ENCODE measurements at regions of chr11 and their contacts with region 1.

Region 1: GRCh38 chr11:123020968-123021367 is 39.3 kb upstream of the BSX start:
- DNase-seq: peak in 6 of 14 experiments; percentile 7 to 62 (median 32)
- ATAC-seq: peak; percentile 60
- H3K4me3 ChIP-seq: no peak overlapping the region
- H3K4me3 Mint-ChIP-seq: no peak overlapping the region
- H3K27ac ChIP-seq: no peak overlapping the region
- H3K27ac Mint-ChIP-seq: no peak overlapping the region
- H3K4me1 ChIP-seq: peaks cover 8% of the 10 kb centered on the region
- H3K4me1 Mint-ChIP-seq: peaks cover 8% of the 10 kb centered on the region
- H3K27me3 ChIP-seq: no peaks in the 10 kb centered on the region
- H3K27me3 Mint-ChIP-seq: peaks cover 11% of the 10 kb centered on the region
- CTCF ChIP-seq: peak; percentile 58

Region 2: GRCh38 chr11:122584670-122585069 is 436.3 kb before region 1 on chr11:
- CTCF ChIA-PET with region 1: interaction called, 4 read pairs
- POLR2A ChIA-PET with region 1: no interaction called
- intact Hi-C with region 1: loop called in 1 of 2 experiments (anchors 5 kb)
- DNase-seq: no peak
- ATAC-seq: no peak
- H3K4me3 ChIP-seq: no peak overlapping the region
- H3K4me3 Mint-ChIP-seq: no peak overlapping the region
- H3K27ac ChIP-seq: no peak overlapping the region
- H3K27ac Mint-ChIP-seq: no peak overlapping the region
- H3K4me1 ChIP-seq: peaks cover 8% of the 10 kb centered on the region
- H3K4me1 Mint-ChIP-seq: peaks cover 7% of the 10 kb centered on the region
- H3K27me3 ChIP-seq: peaks cover 4 to 6% of the 10 kb centered on the region in 2 experiments
- H3K27me3 Mint-ChIP-seq: no peaks in the 10 kb centered on the region
- CTCF ChIP-seq: no peak

Region 3: GRCh38 chr11:122628810-122629555 is 392.0 kb before region 1 on chr11:
- CTCF ChIA-PET with region 1: no interaction called
- POLR2A ChIA-PET with region 1: no interaction called
- intact Hi-C with region 1: loop called in 1 of 2 experiments (anchors 5 kb)
- DNase-seq: peak; percentile 40 to 81 (median 64)
- ATAC-seq: peak; percentile 80
- H3K4me3 ChIP-seq: no peak overlapping the region
- H3K4me3 Mint-ChIP-seq: no peak overlapping the region
- H3K27ac ChIP-seq: no peak overlapping the region
- H3K27ac Mint-ChIP-seq: no peak overlapping the region
- H3K4me1 ChIP-seq: no peaks in the 10 kb centered on the region
- H3K4me1 Mint-ChIP-seq: peaks cover 14% of the 10 kb centered on the region
- H3K27me3 ChIP-seq: no peaks in the 10 kb centered on the region
- H3K27me3 Mint-ChIP-seq: no peaks in the 10 kb centered on the region
- CTCF ChIP-seq: peak; percentile 65

Region 4: GRCh38 chr11:122796128-122796717 is 224.7 kb before region 1 on chr11:
- CTCF ChIA-PET with region 1: interaction called, 3 read pairs
- POLR2A ChIA-PET with region 1: no interaction called
- intact Hi-C with region 1: loop called (anchors 1 to 10 kb)
- DNase-seq: peak; percentile 52 to 78 (median 60)
- ATAC-seq: peak; percentile 94
- H3K4me3 ChIP-seq: no peak overlapping the region
- H3K4me3 Mint-ChIP-seq: no peak overlapping the region
- H3K27ac ChIP-seq: no peak overlapping the region
- H3K27ac Mint-ChIP-seq: no peak overlapping the region
- H3K4me1 ChIP-seq: no peaks in the 10 kb centered on the region
- H3K4me1 Mint-ChIP-seq: no peaks in the 10 kb centered on the region
- H3K27me3 ChIP-seq: no peaks in the 10 kb centered on the region
- H3K27me3 Mint-ChIP-seq: no peaks in the 10 kb centered on the region
- CTCF ChIP-seq: peak; percentile 95

Region 5: DNA sequence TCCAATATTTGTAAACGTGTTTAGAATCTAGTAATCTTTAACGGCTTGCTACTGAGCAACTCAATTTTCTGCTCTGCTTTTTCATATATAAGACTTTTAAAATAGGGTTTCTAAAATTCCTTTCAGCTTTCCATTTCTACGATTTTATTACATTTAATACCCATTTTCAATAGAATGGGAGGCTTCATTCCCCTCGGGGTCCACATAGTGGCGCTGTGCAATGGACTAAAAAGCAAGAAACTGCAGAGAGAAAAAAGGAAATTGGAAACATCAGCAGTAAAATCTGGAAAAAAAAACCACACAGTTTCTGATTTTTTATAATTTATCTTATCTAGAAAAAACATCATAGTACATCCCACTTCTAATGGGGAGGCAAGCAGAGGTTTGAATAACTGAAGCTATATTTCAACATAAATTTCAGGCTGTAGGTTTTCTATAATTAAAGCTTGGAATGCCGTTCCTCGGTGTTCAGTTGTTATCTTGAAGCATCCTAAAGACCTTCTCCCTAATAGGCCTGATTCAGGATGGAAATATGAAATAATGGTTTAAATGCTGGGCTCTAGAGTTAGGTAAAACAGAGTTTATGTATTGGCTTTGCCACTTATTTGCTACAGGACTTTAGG is 157.2 kb before region 1 on chr11:
- CTCF ChIA-PET with region 1: interaction called, 8 read pairs
- POLR2A ChIA-PET with region 1: interaction called, 6 read pairs
- intact Hi-C with region 1: loop called (anchors 1 kb)
- DNase-seq: peak in 12 of 14 experiments; percentile 12 to 66 (median 31)
- ATAC-seq: peak; percentile 49
- H3K4me3 ChIP-seq: no peak overlapping the region
- H3K4me3 Mint-ChIP-seq: no peak overlapping the region
- H3K27ac ChIP-seq: no peak overlapping the region
- H3K27ac Mint-ChIP-seq: no peak overlapping the region
- H3K4me1 ChIP-seq: no peaks in the 10 kb centered on the region
- H3K4me1 Mint-ChIP-seq: no peaks in the 10 kb centered on the region
- H3K27me3 ChIP-seq: no peaks in the 10 kb centered on the region
- H3K27me3 Mint-ChIP-seq: no peaks in the 10 kb centered on the region
- CTCF ChIP-seq: peak; percentile 93

Region 6: DNA sequence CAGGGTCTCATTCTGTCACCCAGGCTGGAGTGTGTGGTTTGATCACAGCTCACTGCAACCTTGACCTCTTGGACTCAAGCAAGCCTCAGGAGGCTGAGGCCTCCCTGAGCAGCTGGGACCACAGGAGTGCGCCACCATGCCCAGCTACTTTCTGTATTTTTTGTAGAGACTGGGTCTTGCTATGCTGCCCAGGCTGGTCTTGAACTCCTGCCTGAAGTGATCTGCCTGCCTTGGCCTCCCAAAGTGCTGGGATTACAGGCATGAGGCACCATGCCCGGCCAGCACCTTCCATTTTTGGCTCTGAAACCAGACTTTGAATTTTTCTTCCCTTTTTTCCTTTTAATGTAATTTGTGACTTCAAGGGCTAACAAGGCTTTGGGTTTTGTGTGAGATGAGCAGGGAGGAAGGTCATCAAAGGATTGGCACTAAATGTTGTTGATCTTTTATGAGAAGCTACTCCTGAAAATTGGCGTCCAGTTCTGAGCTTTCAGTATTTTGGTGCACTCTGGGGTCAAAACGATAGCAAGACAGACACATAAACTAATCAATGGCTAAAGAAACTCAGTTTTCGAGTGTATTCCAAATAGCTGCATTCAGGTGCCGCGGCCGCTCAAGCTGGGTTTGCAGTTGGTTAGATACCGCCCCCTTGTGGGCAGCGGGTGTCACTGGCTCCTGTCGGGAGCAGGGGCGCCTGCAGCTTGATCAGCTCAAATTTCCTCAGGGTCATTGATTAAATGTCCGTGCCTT is 226.0 kb after region 1 on chr11:
- CTCF ChIA-PET with region 1: interaction called, 9 read pairs
- POLR2A ChIA-PET with region 1: no interaction called
- intact Hi-C with region 1: loop called in 1 of 2 experiments (anchors 10 kb)
- DNase-seq: peak; percentile 70 to 89 (median 79)
- ATAC-seq: peak; percentile 92
- H3K4me3 ChIP-seq: no peak overlapping the region
- H3K4me3 Mint-ChIP-seq: no peak overlapping the region
- H3K27ac ChIP-seq: no peak overlapping the region
- H3K27ac Mint-ChIP-seq: no peak overlapping the region
- H3K4me1 ChIP-seq: peaks cover 7% of the 10 kb centered on the region
- H3K4me1 Mint-ChIP-seq: no peaks in the 10 kb centered on the region
- H3K27me3 ChIP-seq: no peaks in the 10 kb centered on the region
- H3K27me3 Mint-ChIP-seq: no peaks in the 10 kb centered on the region
- CTCF ChIP-seq: peak; percentile 95